ENCODE measurements at regions of chr12 and their contacts with region 1.

Region 1: GRCh38 chr12:39628836-39629235 is 9.2 kb upstream of the ABCD2 start:
- DNase-seq: no peak
- H3K4me3 Mint-ChIP-seq: peak overlapping the region; percentile 58
- H3K27ac Mint-ChIP-seq: peak overlapping the region; percentile 94
- H3K4me1 Mint-ChIP-seq: peaks cover 46% of the 10 kb centered on the region
- H3K27me3 Mint-ChIP-seq: no peaks in the 10 kb centered on the region

Region 2: DNA sequence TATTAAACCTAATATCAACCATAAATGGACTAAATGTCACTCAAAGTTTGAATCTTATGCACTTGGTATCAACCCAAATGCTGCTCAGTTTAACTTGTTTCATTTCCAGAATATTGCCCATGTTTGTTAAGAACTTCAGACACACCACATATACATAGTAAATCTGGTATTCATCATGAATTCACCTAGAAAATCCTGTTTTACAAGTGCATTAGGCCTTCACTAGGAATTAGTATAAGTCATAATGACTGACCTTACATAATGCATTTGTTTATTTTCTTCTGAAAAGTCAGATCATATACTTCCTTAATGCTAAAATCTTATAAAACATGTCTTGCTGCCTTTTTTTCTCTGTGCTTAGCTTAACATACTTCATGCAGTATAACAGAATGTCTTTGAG is 75.4 kb before region 1 on chr12:
- intact Hi-C with region 1: no loop called
- DNase-seq: no peak
- H3K4me3 Mint-ChIP-seq: no peak overlapping the region
- H3K27ac Mint-ChIP-seq: no peak overlapping the region
- H3K4me1 Mint-ChIP-seq: no peaks in the 10 kb centered on the region
- H3K27me3 Mint-ChIP-seq: no peaks in the 10 kb centered on the region

Region 3: GRCh38 chr12:39643052-39643451 is 14.2 kb after region 1 on chr12:
- intact Hi-C with region 1: loop called (anchors 2 kb)
- DNase-seq: no peak
- H3K4me3 Mint-ChIP-seq: no peak overlapping the region
- H3K27ac Mint-ChIP-seq: no peak overlapping the region
- H3K4me1 Mint-ChIP-seq: peaks cover 20% of the 10 kb centered on the region
- H3K27me3 Mint-ChIP-seq: peaks cover 1% of the 10 kb centered on the region

Region 4: DNA sequence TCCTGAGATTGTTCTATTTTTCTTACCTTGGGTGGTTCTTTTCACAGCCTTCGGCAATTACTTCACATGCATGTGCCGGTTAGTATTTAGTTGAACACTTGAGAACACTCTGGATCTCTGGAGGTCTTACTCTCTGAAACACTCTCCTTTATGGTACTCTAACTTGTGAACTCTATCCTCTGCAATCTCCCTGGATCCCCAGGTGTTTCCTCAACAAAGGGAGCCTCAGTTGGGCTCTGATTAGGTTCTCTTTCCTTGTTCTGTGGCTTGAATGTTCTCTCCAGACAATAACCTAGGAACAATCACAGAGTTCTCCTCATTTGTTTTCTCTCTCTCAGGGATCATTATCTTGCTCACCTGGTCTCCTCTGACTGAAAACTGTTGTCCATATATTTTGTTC is 31.3 kb after region 1 on chr12:
- intact Hi-C with region 1: loop called (anchors 5 kb)
- DNase-seq: no peak
- H3K4me3 Mint-ChIP-seq: no peak overlapping the region
- H3K27ac Mint-ChIP-seq: no peak overlapping the region
- H3K4me1 Mint-ChIP-seq: peaks cover 11% of the 10 kb centered on the region
- H3K27me3 Mint-ChIP-seq: no peaks in the 10 kb centered on the region

Region 5: DNA sequence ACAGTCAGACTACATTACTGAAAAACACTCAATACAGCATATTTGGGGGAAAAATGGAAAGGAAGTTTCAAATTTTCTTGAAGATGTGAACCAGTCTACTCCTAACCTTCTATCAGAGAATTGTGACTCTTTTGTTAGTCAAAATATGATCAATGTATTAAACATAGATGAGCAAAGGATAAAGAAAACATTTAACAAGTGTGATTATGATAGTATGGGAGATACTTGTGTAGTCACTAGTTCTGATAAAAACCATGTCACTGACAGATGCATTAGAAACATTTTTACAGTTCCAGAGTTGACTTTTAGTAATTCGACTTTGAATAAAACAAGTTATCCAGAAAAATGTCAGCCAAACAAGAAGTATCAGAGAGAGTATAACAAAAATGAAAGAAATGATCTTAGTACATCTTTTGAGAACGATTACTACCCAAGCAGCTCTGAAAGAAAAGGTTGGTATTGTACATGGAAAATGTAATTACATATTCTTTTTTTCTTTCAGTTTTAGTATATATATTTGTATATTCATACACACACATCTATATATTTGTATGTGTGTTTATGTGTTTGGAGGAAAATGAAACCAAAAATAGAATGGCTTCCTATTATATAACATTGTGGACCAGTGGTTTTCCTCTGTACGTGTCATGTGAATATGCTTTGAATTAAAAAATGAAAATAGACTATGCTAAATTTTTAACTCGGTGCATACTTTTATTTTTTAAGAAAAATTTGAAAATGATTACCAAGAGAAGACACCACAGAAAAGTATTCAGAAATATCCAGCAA is 54.0 kb after region 1 on chr12:
- intact Hi-C with region 1: loop called (anchors 2 kb)
- DNase-seq: no peak
- H3K4me3 Mint-ChIP-seq: peak overlapping the region; percentile 72
- H3K27ac Mint-ChIP-seq: peak overlapping the region; percentile 64
- H3K4me1 Mint-ChIP-seq: peaks cover 52% of the 10 kb centered on the region
- H3K27me3 Mint-ChIP-seq: no peaks in the 10 kb centered on the region

Region 6: GRCh38 chr12:39752482-39753147 is 123.8 kb after region 1 on chr12:
- intact Hi-C with region 1: no loop called
- DNase-seq: no peak
- H3K4me3 Mint-ChIP-seq: no peak overlapping the region
- H3K27ac Mint-ChIP-seq: no peak overlapping the region
- H3K4me1 Mint-ChIP-seq: no peaks in the 10 kb centered on the region
- H3K27me3 Mint-ChIP-seq: peaks cover 1% of the 10 kb centered on the region

Region 7: DNA sequence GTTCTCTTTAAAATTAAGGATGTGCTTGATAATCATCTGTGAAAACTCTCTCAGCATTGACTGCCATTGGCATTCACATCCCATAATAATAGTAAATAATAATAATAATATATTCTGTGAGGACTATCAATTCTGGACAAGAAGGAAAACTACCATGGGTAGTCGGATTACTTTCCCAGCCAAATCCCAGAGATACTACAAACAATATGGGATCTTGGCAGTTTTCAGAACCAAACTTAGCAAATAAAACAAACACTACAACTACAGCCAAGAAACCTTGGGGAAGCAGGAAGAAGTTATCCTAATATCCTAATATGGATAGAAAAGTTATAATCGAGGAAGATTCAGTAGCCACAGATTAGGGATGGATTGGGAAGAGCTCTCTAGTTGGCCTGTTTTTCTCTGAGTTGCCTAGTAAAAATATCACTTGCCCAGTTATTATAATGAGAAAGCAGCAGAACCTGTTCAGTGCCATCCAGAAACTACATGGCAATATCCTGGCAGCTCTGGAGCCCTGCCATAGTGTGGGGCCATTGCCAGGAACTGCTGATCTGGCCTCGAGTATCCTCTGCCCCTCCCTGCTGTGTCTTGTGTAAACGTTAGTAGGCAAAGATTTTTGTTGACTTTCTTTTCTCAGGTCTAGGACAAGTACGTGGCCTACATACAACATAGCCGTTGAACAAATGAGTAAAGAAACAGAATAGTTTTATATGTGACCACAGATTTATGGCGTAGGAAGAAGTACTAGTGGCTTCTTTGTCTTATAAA is 283.6 kb after region 1 on chr12:
- intact Hi-C with region 1: no loop called
- DNase-seq: no peak
- H3K4me3 Mint-ChIP-seq: no peak overlapping the region
- H3K27ac Mint-ChIP-seq: no peak overlapping the region
- H3K4me1 Mint-ChIP-seq: no peaks in the 10 kb centered on the region
- H3K27me3 Mint-ChIP-seq: peaks cover 3% of the 10 kb centered on the region